ENCODE measurements at regions of chr22 and their contacts with region 1.

Region 1: GRCh38 chr22:31676700-31677099 is 14.7 kb upstream of the PISD start:
- DNase-seq: peak; percentile 93
- H3K4me3 Mint-ChIP-seq: peak overlapping the region; percentile 87
- H3K27ac Mint-ChIP-seq: peak overlapping the region; percentile 95
- H3K4me1 Mint-ChIP-seq: peaks cover 24% of the 10 kb centered on the region
- H3K27me3 Mint-ChIP-seq: no peaks in the 10 kb centered on the region

Region 2: DNA sequence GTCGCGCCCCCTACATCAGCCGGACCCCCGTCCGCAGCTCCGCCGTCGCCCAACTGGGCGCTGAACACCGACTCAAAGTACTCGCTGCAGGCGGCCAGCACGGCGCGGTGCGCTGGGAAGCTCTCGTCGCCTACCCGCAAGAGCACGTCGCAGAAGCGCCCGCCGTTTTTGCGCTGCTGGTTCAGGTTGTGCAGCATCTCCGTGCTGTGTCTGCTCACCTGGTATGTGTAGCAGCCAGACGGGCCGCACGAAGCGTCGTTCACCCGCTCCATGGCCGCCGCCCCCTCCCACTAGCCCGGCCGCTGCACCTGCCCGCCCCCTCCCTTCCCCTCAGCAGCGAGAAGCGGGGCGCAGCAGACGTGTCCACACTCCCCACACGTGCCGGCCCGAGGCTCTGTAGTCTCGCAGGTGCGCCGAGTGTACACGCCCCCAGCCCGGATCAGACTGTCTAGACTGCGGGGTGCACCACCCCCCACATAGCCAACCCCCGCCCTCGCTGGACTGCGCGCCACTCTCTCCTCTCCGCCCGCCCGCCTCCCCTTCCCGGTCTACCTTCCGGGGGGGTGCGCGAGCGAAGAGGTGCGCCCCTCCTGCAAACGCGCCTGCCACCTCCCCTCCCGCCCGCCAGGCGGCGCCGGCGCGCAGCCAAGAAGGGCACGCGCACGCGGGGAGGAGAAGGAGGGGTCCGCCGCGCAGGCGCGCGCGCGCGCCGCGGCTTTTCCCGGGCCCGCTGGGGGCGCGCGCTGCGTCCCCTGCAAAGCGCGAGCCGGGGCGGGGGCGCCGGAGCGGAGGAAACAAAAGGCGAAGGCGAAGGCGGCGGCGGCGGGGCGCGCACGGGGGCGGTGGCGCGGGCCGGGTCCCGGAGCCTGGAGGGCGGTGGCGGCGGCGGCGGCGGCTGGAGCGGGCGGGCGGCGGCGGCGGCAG is 331.1 kb before region 1 on chr22:
- CTCF ChIA-PET with region 1: no interaction called
- POLR2A ChIA-PET with region 1: no interaction called
- DNase-seq: peak; percentile 86
- H3K4me3 Mint-ChIP-seq: peak overlapping the region; percentile 83
- H3K27ac Mint-ChIP-seq: peak overlapping the region; percentile 91
- H3K4me1 Mint-ChIP-seq: peaks cover 55% of the 10 kb centered on the region
- H3K27me3 Mint-ChIP-seq: no peaks in the 10 kb centered on the region

Region 3: DNA sequence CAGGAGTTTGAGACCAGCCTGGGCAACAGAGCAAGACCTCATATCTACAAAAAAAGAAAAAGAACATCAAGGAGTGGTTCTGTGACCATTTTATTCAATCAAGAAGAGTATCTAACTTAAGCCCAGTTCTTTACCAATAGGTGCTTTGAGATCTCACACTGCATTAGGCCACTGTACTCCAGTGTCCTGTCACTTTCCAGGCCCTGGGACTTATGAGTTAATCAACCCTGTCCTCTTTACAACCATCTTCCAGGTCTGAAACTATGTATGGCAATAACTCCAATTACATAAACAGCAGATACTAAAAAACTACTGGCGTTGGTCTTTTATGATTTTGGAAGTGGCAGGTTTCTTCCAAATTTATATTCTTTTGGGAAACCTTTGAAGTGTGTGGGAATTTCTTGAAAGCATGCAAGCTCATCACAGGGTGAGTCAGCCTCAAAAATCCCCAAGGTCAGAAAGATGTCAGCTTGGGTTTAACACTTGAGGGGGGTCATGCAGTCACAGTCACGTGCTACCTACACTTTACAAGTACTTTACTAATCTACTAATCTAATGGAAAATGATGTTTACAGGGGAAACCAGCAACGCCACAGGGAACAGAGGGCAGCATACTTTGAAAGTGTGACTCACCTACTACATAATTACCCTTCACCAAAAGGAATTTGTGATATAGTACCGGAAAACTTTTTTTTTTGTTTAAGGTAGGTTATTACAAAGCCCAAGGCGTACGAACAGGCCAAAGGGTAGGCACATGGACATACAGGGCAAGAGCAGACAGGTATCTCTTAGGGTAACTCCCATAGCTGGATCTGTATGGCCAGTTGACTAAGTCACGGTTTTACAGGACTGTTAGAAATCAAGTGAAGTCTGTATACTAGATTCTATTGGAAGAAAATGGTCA is 30.3 kb before region 1 on chr22:
- CTCF ChIA-PET with region 1: no interaction called
- POLR2A ChIA-PET with region 1: no interaction called
- DNase-seq: no peak
- H3K4me3 Mint-ChIP-seq: no peak overlapping the region
- H3K27ac Mint-ChIP-seq: no peak overlapping the region
- H3K4me1 Mint-ChIP-seq: peaks cover 11% of the 10 kb centered on the region
- H3K27me3 Mint-ChIP-seq: no peaks in the 10 kb centered on the region

Region 4: DNA sequence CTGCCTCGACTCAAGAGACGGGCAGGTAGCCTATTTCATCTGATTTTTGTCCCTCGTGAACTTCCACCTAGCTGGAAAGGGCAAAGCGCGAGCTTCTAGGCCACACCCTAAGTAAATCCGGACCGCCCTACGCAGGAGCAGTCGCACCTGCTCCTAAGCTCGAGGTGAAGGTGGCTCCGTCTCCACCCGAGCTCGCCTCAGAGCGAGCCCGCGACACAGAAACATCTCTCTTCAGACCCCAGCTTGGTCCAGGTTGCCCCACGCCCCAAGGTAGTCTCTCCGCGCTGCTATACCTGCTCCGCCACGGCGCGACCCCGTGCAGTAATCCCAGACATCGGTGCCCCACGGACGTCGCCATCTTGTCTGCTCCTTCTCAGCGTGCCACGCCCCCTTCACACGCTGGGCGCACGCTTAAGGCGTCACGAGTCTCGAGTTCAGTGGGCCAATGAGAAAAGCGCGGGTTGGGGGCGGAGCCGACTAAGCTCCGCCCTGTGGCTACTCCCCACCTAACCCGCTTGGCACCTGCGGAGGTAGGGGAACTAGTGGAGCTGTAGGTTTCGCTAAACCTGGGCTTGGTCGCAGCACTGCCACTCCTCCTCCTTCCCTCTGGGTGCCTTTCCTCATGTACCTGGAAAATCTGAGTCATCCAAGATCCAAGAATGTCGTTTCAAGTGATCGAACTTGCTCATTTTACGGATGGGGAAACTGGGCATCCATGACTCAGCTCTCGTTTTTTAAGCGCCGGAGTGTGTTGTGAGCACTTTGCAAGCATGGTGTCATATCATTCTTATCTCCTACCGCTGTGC is 14.6 kb before region 1 on chr22 and contains the start of gene PISD:
- CTCF ChIA-PET with region 1: interaction called, 17 read pairs
- POLR2A ChIA-PET with region 1: no interaction called
- DNase-seq: peak; percentile 97
- H3K4me3 Mint-ChIP-seq: peak within 1 kb of the TSS; percentile 92
- H3K27ac Mint-ChIP-seq: peak within 1 kb of the TSS; percentile 95
- H3K4me1 Mint-ChIP-seq: peaks cover 33% of the 10 kb centered on the region
- H3K27me3 Mint-ChIP-seq: peaks cover 3% of the 10 kb centered on the region
- total RNA-seq, gene PISD: 19.4 to 19.6 TPM